MCF 10A (cell line): ENCODE measurements at regions of chr10 and their contacts with region 1.

Region 1: DNA sequence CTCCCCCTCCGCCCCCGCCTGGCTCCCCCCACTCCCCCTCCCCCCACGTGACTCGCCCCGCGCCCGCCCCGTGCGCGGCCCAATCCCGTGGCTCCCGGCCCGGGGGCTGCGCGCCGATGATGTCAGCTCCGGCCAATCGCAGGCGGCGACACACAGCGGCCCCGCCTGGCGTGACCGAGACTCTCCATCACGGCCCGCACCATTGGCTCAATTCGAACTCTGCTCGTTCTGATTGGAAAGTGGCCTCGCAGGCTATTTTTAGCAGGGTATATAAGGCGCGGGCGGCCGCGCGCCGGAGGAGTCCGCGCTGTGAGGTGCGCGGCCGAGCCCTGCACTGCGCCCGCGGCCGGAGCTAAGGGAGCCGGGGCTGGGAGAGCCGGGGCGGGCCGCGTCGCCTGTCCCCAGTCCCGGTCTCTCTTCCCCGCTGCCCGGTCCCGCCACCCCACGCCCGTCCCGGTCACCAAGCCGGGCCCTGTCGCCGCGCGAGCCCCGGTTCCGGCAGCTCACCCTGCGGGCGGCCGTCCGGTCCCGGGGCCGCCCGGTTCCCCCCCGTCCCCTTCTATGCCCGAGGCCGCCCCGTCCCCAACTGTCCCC is 345 bp upstream of the KLF6 start:
- DNase-seq: peak; percentile 98
- H3K4me3 Mint-ChIP-seq: peak overlapping the region; percentile 96
- H3K27ac Mint-ChIP-seq: peak overlapping the region; percentile 100
- H3K4me1 Mint-ChIP-seq: peaks cover 17% of the 10 kb centered on the region
- H3K27me3 Mint-ChIP-seq: no peaks in the 10 kb centered on the region
- CTCF ChIP-seq: no peak

Region 2: DNA sequence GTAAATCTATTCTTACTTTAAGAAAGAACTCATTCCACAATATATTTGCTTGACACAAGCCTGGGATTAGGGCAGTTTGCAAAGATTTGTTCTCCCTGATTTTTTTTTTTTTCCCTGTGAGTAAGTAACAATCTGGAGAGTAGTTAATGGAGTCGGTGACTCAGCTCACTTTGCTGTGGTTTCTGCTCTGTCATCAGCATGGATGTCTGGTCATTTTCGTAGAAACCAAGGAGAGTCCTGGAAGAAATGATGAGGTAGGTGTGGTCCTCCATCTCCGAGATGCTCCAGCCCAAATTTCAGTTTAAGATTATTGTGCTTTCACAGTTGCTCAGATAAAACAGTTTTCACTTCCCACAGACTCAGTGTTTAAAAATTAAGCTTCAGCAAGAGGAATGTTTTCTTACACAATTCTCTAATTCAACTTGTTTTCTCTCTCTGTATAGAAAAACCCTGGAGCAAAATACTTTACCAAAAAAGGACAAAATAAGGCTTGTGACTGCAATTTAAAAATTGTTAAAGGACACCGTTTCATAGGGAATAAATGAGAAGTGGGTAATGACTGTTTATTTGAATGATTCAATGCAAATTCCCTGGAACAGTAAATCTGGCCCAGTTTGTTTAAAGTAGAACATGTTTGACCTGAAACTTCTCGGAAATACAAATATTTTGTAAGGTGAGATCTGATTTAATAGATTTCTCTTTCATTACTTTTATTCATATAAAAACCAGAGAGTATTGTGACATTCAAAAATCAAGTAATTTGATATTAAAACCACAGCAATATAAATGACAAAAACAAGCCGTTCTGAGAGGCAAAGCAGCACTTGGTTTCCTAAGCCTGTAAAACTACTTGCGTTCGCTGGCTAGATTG is 536.2 kb before region 1 on chr10:
- CTCF ChIA-PET with region 1: interaction called, 3 read pairs
- POLR2A ChIA-PET with region 1: interaction called, 13 read pairs
- intact Hi-C with region 1: no loop called
- DNase-seq: peak; percentile 80
- H3K4me3 Mint-ChIP-seq: no peak overlapping the region
- H3K27ac Mint-ChIP-seq: peak overlapping the region; percentile 87
- H3K4me1 Mint-ChIP-seq: peaks cover 7% of the 10 kb centered on the region
- H3K27me3 Mint-ChIP-seq: peaks cover 17% of the 10 kb centered on the region
- CTCF ChIP-seq: no peak

Region 3: GRCh38 chr10:3740157-3740871 is 45.0 kb before region 1 on chr10:
- CTCF ChIA-PET with region 1: no interaction called
- POLR2A ChIA-PET with region 1: interaction called, 36 read pairs
- intact Hi-C with region 1: no loop called
- DNase-seq: peak; percentile 85
- H3K4me3 Mint-ChIP-seq: no peak overlapping the region
- H3K27ac Mint-ChIP-seq: peak overlapping the region; percentile 85
- H3K4me1 Mint-ChIP-seq: peaks cover 15% of the 10 kb centered on the region
- H3K27me3 Mint-ChIP-seq: no peaks in the 10 kb centered on the region
- CTCF ChIP-seq: no peak

Region 4: GRCh38 chr10:3852147-3852904 is 67.0 kb after region 1 on chr10:
- CTCF ChIA-PET with region 1: interaction called, 3 read pairs
- POLR2A ChIA-PET with region 1: interaction called, 348 read pairs
- intact Hi-C with region 1: loop called (anchors 1 kb)
- DNase-seq: peak; percentile 94
- H3K4me3 Mint-ChIP-seq: peak overlapping the region; percentile 54
- H3K27ac Mint-ChIP-seq: peak overlapping the region; percentile 98
- H3K4me1 Mint-ChIP-seq: peaks cover 33% of the 10 kb centered on the region
- H3K27me3 Mint-ChIP-seq: no peaks in the 10 kb centered on the region
- CTCF ChIP-seq: no peak

Region 5: DNA sequence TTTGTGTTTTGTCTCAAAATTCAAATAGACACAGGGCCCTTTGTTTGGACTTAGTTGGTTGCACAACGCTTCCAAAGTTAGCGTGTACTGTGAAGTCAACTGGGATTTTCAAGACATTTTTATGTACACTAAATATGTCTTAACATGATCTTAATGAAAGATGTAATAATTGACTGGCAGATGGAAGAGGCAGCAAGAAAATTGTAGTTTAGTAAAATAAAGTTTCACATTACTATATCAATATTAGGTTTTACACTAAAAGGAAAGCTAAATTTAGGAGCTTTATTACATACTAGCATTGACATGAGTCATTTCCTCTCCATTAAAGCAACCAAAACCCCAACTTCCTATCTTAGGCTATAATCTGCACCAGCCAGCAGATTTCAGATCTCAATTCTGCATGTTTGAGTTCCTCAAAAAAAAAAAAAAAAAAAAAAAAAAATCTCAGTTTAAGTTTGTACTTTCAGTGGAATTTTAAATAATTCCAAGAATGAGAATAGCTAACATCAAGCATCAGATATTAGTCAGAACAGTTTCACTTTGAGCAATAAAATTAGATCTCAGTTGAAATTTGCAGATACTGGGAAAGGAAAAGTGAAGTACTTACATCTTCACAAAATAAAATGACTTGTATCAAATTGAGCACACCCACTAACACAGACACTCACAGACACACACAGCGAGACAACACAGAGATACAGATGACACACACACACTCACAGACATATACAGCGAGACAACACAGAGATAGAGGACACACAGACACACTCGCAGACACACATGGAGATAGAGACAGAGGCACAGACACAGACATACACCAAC is 346.3 kb after region 1 on chr10:
- CTCF ChIA-PET with region 1: no interaction called
- POLR2A ChIA-PET with region 1: interaction called, 10 read pairs
- intact Hi-C with region 1: no loop called
- DNase-seq: peak; percentile 73
- H3K4me3 Mint-ChIP-seq: no peak overlapping the region
- H3K27ac Mint-ChIP-seq: no peak overlapping the region
- H3K4me1 Mint-ChIP-seq: no peaks in the 10 kb centered on the region
- H3K27me3 Mint-ChIP-seq: no peaks in the 10 kb centered on the region
- CTCF ChIP-seq: no peak

Region 6: DNA sequence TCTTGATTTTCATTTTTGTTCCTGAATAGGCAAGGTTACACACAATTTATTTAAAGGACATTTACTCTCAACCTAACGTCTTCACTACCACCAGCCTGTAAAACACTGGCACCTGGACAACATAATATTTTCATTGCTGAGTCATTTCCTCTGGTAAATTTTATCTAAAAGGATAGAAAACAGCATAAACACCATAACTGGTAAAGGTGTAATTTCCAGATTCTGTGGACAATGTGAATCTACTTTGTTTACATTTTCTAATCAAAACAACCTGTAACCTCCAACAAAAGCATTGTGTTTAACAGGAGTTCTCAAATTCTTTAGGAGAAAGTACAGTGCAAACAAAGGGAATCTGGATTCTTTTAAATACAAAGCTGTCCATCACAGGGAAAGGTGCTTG is 568.6 kb after region 1 on chr10:
- CTCF ChIA-PET with region 1: no interaction called
- POLR2A ChIA-PET with region 1: interaction called, 37 read pairs
- intact Hi-C with region 1: no loop called
- DNase-seq: peak; percentile 73
- H3K4me3 Mint-ChIP-seq: peak overlapping the region; percentile 17
- H3K27ac Mint-ChIP-seq: peak overlapping the region; percentile 90
- H3K4me1 Mint-ChIP-seq: peaks cover 44% of the 10 kb centered on the region
- H3K27me3 Mint-ChIP-seq: no peaks in the 10 kb centered on the region
- CTCF ChIP-seq: no peak

Region 7: DNA sequence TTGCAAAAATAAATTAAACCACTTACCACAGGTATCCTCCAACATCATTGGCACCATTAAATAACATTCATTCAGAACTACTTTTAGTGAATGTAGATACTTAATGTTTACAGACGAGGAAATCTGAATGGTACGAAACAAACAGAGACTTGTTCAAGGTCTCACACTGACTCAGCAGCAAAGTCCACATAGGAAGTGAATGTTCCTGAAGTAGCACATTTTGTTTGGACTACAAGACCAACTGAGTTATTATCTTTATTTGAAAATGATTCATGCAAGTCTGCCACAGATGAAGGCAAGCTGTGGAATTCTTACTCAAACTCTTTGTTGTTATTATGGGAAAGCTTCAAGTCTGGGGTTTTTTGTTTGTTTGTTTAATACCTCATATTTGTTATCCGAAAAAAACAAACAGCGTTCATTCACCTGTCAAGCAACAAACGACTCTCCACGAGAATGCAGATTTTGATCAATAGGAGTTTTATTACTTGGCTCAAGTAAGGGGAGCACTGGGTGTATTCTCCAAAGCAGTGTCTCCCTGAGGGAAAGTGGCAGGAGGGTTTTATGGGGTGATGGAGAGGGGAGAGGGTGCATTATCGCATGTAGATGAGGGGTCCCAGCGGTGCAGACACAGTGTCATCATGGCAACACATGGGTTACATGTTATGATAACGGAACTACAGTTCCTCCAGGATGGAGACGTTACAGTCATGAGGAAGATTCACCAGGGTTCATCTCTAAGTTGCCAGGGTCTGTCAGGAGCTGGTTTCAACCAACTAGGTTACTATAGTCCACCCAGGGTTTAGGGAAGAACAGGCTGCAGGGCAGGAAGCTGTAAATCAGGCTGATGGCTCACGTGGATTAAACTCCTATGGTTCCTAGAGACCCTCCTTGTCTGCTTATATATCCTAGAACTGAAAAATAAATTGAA is 892.9 kb after region 1 on chr10:
- CTCF ChIA-PET with region 1: no interaction called
- POLR2A ChIA-PET with region 1: interaction called, 120 read pairs
- intact Hi-C with region 1: no loop called
- DNase-seq: peak; percentile 81
- H3K4me3 Mint-ChIP-seq: peak overlapping the region; percentile 58
- H3K27ac Mint-ChIP-seq: peak overlapping the region; percentile 90
- H3K4me1 Mint-ChIP-seq: peaks cover 33% of the 10 kb centered on the region
- H3K27me3 Mint-ChIP-seq: no peaks in the 10 kb centered on the region
- CTCF ChIP-seq: no peak